ENCODE measurements at regions of chr16 and their contacts with region 1.

Region 1: GRCh38 chr16:53892155-53892554 is 188.2 kb downstream of the FTO start:
- DNase-seq: peak in 1 of 2 donors; percentile 55
- ATAC-seq: peak in 7 of 8 donors; percentile 58 to 84 (median 69)
- H3K4me3 ChIP-seq: no peak overlapping the region
- H3K27ac ChIP-seq: no peak overlapping the region
- H3K4me1 ChIP-seq: peaks cover 4 to 43% (median 31%) of the 10 kb centered on the region in 9 donors
- H3K27me3 ChIP-seq: no peaks in the 10 kb centered on the region
- CTCF ChIP-seq: peak; percentile 50 to 84 (median 75)

Region 2: DNA sequence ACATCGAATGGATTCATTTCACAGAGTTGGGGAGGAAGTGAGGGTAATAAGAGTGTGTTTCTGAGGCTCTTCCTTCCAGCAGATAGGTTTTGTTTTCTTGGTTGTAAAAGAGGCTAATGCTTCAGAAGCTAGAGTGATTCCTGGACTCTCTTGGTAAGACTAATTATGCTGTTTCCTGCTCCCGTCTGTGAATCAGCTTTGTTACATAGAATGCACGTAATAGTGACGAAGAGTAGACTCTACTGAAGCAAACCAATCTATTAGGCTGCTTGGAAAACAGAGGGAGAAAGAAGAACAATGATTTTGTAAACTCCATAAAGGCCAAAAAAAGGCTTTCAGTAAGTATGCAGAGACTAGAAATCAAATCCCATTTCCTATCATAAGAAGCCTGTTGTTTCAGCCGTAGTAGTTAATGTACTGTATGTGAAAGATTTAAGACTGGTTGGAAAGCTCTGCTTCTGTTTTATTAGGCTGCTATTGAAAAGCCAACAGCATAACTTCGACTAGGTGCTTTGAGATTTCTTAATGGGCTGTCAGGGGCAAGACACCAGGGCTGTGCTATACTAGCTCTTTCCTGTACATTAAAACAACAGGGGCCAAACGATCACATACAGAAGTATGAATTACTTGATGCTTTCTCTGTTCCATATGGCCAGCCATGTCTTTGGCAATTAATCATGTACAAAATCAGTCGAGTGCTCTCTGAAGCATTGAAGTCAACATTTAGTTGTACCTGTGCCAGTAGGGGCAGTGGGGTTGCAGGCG is 30.8 kb after region 1 on chr16:
- intact Hi-C with region 1: no loop called
- DNase-seq: no peak
- ATAC-seq: no peak
- H3K4me3 ChIP-seq: no peak overlapping the region
- H3K27ac ChIP-seq: no peak overlapping the region
- H3K4me1 ChIP-seq: peaks cover 0 to 8% (median 0%) of the 10 kb centered on the region in 9 donors
- H3K27me3 ChIP-seq: no peaks in the 10 kb centered on the region
- CTCF ChIP-seq: no peak

Region 3: GRCh38 chr16:54812229-54812628 is 920.1 kb after region 1 on chr16:
- intact Hi-C with region 1: loop called in 1 of 10 experiments (anchors 10 kb)
- DNase-seq: no peak
- ATAC-seq: peak in 1 of 8 donors; percentile 59
- H3K4me3 ChIP-seq: no peak overlapping the region
- H3K27ac ChIP-seq: no peak overlapping the region
- H3K4me1 ChIP-seq: no peaks in the 10 kb centered on the region
- H3K27me3 ChIP-seq: no peaks in the 10 kb centered on the region
- CTCF ChIP-seq: peak in 6 of 9 donors; percentile 30 to 57 (median 48)

Measured in heart right ventricle (tissue), 16 donors.